Activated CD4-positive, alpha-beta T cell treated with anti-CD3 and anti-CD28 coated beads for 36 hours (primary cell): ENCODE measurements at regions of chr3 and their contacts with region 1.

Region 1: DNA sequence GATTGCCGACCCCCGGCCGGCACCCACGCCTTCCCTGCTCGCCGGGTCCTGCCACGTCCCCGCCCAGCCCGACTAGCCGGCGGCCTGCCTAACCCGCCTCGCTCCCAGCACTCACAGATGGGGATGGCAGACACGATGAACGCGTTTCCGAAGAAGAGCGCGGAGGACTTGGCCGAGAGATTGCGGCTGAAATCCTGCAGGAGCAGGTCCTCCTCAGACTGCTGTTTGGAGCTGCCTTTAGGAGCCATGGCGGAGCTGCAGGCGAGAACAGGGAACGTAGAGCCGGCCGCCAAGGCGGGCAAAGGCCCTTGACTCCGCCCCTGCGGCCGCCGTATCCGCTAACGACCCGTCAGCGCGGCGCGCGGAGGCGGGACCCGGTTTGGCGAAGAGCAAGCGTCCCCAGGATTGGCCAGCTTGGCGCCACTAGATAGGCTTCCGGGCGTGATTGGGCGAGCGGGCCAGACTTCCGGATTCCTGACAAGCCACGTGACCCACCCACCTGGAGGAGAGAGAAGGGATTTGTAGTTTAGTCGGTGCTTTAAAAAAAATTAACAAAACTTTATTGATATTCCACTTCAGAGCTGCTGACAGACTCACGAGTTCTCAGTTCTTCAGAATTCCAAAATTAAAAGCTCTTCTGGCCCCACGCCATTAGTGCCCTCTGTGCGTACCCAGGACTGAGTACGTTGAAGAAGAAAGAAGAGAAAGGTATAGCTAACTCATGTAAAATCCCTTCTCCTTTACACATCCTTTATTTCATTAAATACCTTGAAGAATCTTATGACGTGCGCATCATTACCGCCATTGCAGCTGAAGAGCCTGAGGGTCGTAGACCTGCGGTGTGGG is at the start of gene SSR3:
- DNase-seq: peak; percentile 100
- ATAC-seq: peak; percentile 99
- H3K4me3 Mint-ChIP-seq: peak within 1 kb of the TSS; percentile 92
- H3K27ac Mint-ChIP-seq: peak within 1 kb of the TSS; percentile 93
- H3K4me1 Mint-ChIP-seq: peaks cover 47% of the 10 kb centered on the region
- H3K27me3 Mint-ChIP-seq: no peaks in the 10 kb centered on the region
- total RNA-seq, gene SSR3: 144 to 156 TPM

Region 2: GRCh38 chr3:155854141-155854940 is 700.7 kb before region 1 on chr3 and contains the start of gene SLC33A1:
- CTCF ChIA-PET with region 1: no interaction called
- POLR2A ChIA-PET with region 1: no interaction called
- intact Hi-C with region 1: loop called in 1 of 2 experiments (anchors 5 kb)
- DNase-seq: peak; percentile 99
- ATAC-seq: peak; percentile 94
- H3K4me3 Mint-ChIP-seq: peak within 1 kb of the TSS; percentile 99
- H3K27ac Mint-ChIP-seq: peak within 1 kb of the TSS; percentile 99
- H3K4me1 Mint-ChIP-seq: peaks cover 33% of the 10 kb centered on the region
- H3K27me3 Mint-ChIP-seq: no peaks in the 10 kb centered on the region
- total RNA-seq, gene SLC33A1: 19.2 to 19.9 TPM

Region 3: DNA sequence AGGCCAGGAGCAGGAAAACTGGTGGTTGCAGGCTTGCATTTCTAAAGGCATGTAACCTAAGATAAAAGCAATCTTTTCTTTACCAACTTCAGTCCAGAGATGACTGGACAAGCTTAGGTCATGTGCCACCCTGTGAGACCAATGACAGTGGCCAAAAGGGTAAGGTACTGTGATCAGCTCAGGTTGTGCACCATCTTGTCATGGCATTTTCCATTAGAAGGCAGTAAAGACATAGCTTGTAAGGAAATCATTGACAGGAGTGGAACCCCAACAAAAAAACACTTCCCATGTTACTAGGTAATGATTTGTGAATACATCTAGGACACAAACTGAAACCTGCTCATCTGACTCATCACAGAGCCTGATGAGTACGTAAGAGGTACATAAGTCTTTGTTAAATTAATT is 35.3 kb before region 1 on chr3:
- CTCF ChIA-PET with region 1: no interaction called
- POLR2A ChIA-PET with region 1: no interaction called
- intact Hi-C with region 1: loop called (anchors 1 to 2 kb)
- DNase-seq: peak; percentile 26
- ATAC-seq: peak; percentile 82
- H3K4me3 Mint-ChIP-seq: no peak overlapping the region
- H3K27ac Mint-ChIP-seq: peak overlapping the region; percentile 3
- H3K4me1 Mint-ChIP-seq: peaks cover 21% of the 10 kb centered on the region
- H3K27me3 Mint-ChIP-seq: peaks cover 26% of the 10 kb centered on the region

Region 4: GRCh38 chr3:156816800-156817645 is 262.0 kb after region 1 on chr3:
- CTCF ChIA-PET with region 1: no interaction called
- POLR2A ChIA-PET with region 1: no interaction called
- intact Hi-C with region 1: loop called (anchors 2 kb)
- DNase-seq: peak; percentile 92
- ATAC-seq: peak; percentile 83
- H3K4me3 Mint-ChIP-seq: peak overlapping the region; percentile 79
- H3K27ac Mint-ChIP-seq: peak overlapping the region; percentile 92
- H3K4me1 Mint-ChIP-seq: peaks cover 36% of the 10 kb centered on the region
- H3K27me3 Mint-ChIP-seq: no peaks in the 10 kb centered on the region

Region 5: GRCh38 chr3:157081681-157082210 is 526.7 kb after region 1 on chr3:
- CTCF ChIA-PET with region 1: interaction called, 4 read pairs
- POLR2A ChIA-PET with region 1: no interaction called
- intact Hi-C with region 1: loop called in 1 of 2 experiments (anchors 1 kb)
- DNase-seq: peak; percentile 90
- ATAC-seq: peak; percentile 91
- H3K4me3 Mint-ChIP-seq: no peak overlapping the region
- H3K27ac Mint-ChIP-seq: peak overlapping the region; percentile 66
- H3K4me1 Mint-ChIP-seq: peaks cover 32% of the 10 kb centered on the region
- H3K27me3 Mint-ChIP-seq: no peaks in the 10 kb centered on the region

Region 6: DNA sequence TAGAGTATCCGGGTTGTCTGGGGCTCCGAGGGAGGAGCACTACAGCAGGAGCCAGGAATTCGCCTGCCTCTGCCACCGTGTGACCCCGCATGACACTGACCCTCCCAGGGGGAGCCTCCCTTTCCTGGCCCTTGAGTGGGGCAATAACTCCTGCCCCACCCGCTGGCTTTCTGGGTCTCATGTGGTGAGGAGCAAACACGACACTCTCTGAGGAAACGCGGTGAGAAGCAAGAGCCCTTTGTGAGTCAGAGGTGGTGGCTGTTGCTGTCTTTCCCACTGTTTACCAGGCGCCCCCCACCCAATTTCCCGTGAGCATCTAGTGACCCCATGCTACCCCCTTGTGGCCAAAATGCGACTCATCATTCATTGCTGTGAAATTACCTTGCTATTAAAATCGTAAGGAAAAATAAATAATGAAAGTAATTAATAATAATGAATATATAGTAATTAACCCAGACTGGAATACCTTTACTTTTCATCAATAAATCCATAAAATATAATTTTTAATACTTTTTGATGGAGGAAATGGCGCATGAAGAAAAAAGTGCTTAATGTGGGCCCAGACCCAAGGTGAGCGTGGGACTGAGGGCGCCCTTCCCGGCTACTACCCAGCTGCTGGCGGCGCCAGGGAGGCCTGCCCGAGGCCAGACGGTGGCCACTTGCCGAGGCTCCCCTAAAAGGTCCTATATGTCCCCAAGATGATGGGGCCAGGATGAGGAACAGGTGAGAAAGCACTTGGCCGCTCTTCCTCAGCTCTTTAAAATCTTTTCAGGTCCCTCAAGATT is 575.6 kb after region 1 on chr3:
- CTCF ChIA-PET with region 1: interaction called, 4 read pairs
- POLR2A ChIA-PET with region 1: no interaction called
- intact Hi-C with region 1: loop called (anchors 1 to 5 kb)
- DNase-seq: peak; percentile 86
- ATAC-seq: peak; percentile 19
- H3K4me3 Mint-ChIP-seq: peak overlapping the region; percentile 57
- H3K27ac Mint-ChIP-seq: peak overlapping the region; percentile 95
- H3K4me1 Mint-ChIP-seq: peaks cover 76% of the 10 kb centered on the region
- H3K27me3 Mint-ChIP-seq: no peaks in the 10 kb centered on the region

Region 7: GRCh38 chr3:157174649-157175498 is 619.8 kb after region 1 on chr3:
- CTCF ChIA-PET with region 1: interaction called, 3 read pairs
- POLR2A ChIA-PET with region 1: no interaction called
- intact Hi-C with region 1: loop called (anchors 1 kb)
- DNase-seq: peak; percentile 99
- ATAC-seq: peak; percentile 95
- H3K4me3 Mint-ChIP-seq: peak overlapping the region; percentile 94
- H3K27ac Mint-ChIP-seq: peak overlapping the region; percentile 99
- H3K4me1 Mint-ChIP-seq: peaks cover 20% of the 10 kb centered on the region
- H3K27me3 Mint-ChIP-seq: no peaks in the 10 kb centered on the region